ENCODE measurements at regions of chr1 and their contacts with region 1.

Region 1: DNA sequence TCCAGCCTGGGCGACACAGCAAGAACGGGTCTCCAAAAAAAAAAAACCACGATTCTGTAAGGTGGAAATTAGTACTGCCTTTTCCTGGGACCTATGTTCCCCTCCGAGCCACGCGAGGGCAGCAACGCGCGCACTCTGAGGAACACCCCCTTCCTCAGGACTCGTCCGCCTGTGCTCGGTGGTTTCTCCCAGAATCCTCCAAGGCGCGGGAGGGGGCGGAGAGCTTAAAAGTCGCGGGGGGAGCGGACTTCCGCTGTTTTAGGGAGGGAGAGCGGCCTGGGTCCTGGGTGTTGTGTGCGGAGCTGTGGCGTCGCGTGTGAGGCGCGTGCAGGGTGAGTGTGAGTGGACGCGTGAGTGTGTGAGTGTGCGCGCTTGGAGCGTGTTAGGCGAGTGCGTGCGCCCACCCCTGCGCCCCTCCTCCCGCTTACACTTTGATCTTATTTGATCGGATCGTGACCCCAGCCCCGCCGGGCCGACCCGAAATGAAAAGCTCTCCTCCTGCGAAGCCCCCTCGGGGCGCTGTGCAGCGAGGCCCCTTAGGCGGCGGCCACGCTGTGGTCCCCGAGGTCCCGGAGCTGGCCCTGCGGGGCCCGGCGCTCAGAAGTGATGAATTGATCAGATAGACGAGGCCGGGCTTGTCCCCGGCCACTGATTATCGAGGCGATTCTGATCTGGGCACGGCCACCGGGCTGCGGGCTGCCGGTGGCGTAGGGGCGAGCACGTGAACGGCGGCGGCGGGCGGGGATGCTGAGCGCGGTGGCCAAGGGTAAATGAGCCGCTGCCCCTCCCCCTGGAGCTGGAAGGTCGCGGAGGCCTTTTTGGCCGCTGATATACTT is 9.6 kb downstream of the TMEM167B start:
- DNase-seq: peak; percentile 95 to 98 (median 97)
- ATAC-seq: peak; percentile 91
- H3K4me3 ChIP-seq: peak overlapping the region; percentile 88 to 93
- H3K4me3 Mint-ChIP-seq: peak overlapping the region; percentile 98
- H3K27ac ChIP-seq: peak overlapping the region; percentile 86 to 93
- H3K27ac Mint-ChIP-seq: peak overlapping the region; percentile 99
- H3K4me1 ChIP-seq: peaks cover 9% of the 10 kb centered on the region
- H3K4me1 Mint-ChIP-seq: peaks cover 18% of the 10 kb centered on the region
- H3K27me3 ChIP-seq: no peaks in the 10 kb centered on the region
- H3K27me3 Mint-ChIP-seq: no peaks in the 10 kb centered on the region
- CTCF ChIP-seq: peak; percentile 83

Region 2: GRCh38 chr1:108199781-108200570 is 900.2 kb before region 1 on chr1 and contains the start of gene SLC25A24:
- CTCF ChIA-PET with region 1: no interaction called
- POLR2A ChIA-PET with region 1: interaction called, 3 read pairs
- intact Hi-C with region 1: loop called in 1 of 2 experiments (anchors 5 kb)
- DNase-seq: peak; percentile 34 to 85 (median 72)
- ATAC-seq: peak; percentile 94
- H3K4me3 ChIP-seq: peak within 1 kb of the TSS; percentile 75 to 98
- H3K4me3 Mint-ChIP-seq: peak within 1 kb of the TSS; percentile 88
- H3K27ac ChIP-seq: peak within 1 kb of the TSS; percentile 70 to 72
- H3K27ac Mint-ChIP-seq: peak within 1 kb of the TSS; percentile 87
- H3K4me1 ChIP-seq: peaks cover 12% of the 10 kb centered on the region
- H3K4me1 Mint-ChIP-seq: peaks cover 31% of the 10 kb centered on the region
- H3K27me3 ChIP-seq: no peaks in the 10 kb centered on the region
- H3K27me3 Mint-ChIP-seq: no peaks in the 10 kb centered on the region
- CTCF ChIP-seq: no peak
- total RNA-seq, gene SLC25A24: 3.3 to 4.3 TPM

Region 3: DNA sequence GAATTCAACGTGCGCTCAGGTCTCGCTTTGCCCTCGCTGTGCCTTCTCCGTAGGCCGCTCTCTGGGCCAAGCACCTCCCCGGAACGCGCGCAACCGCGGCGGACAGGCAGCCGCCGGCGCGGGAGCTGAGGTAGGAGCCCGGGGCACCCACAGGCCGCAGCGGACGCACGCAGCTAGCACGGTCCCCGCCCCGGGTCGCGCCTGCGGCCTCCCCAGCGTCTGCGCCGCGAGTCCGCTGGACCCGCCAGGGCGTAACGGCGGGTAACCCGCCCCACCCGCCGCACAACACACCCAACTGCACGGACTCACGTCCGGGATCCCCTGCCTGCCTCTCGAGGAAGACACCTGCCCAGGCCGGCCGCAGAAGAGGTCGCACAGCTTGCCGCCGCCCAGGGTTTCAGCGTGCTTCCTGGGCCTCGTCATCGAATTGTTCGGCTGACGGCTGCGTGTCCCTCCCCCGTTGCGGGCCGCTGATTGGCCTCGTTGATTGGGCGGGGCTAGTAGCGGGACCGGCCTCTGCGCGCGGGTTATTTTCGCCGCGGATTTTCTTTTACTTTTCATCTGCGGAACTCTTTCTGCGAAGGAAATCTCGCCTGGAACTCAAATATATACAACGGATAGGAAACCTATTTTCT is 137.0 kb before region 1 on chr1 and contains the start of gene CLCC1:
- CTCF ChIA-PET with region 1: no interaction called
- POLR2A ChIA-PET with region 1: interaction called, 12 read pairs
- intact Hi-C with region 1: loop called in 1 of 2 experiments (anchors 1 kb)
- DNase-seq: peak; percentile 83 to 96 (median 91)
- ATAC-seq: peak; percentile 87
- H3K4me3 ChIP-seq: peak within 1 kb of the TSS; percentile 57 to 86
- H3K4me3 Mint-ChIP-seq: peak within 1 kb of the TSS; percentile 87
- H3K27ac ChIP-seq: peak within 1 kb of the TSS; percentile 75 to 88
- H3K27ac Mint-ChIP-seq: peak within 1 kb of the TSS; percentile 92
- H3K4me1 ChIP-seq: peaks cover 24% of the 10 kb centered on the region
- H3K4me1 Mint-ChIP-seq: peaks cover 39% of the 10 kb centered on the region
- H3K27me3 ChIP-seq: no peaks in the 10 kb centered on the region
- H3K27me3 Mint-ChIP-seq: no peaks in the 10 kb centered on the region
- CTCF ChIP-seq: no peak
- total RNA-seq, gene CLCC1: 4.6 to 5.8 TPM

Region 4: GRCh38 chr1:109075531-109076490 is 24.3 kb before region 1 on chr1 and contains the start of gene TAF13:
- CTCF ChIA-PET with region 1: interaction called, 13 read pairs
- POLR2A ChIA-PET with region 1: interaction called, 31 read pairs
- intact Hi-C with region 1: loop called (anchors 1 kb)
- DNase-seq: peak; percentile 63 to 94 (median 86)
- ATAC-seq: peak; percentile 95
- H3K4me3 ChIP-seq: peak within 1 kb of the TSS; percentile 66 to 72
- H3K4me3 Mint-ChIP-seq: peak within 1 kb of the TSS; percentile 98
- H3K27ac ChIP-seq: peak within 1 kb of the TSS; percentile 93 to 97
- H3K27ac Mint-ChIP-seq: peak within 1 kb of the TSS; percentile 99
- H3K4me1 ChIP-seq: peaks cover 16% of the 10 kb centered on the region
- H3K4me1 Mint-ChIP-seq: peaks cover 23% of the 10 kb centered on the region
- H3K27me3 ChIP-seq: no peaks in the 10 kb centered on the region
- H3K27me3 Mint-ChIP-seq: no peaks in the 10 kb centered on the region
- CTCF ChIP-seq: no peak
- total RNA-seq, gene TAF13: 36.2 to 40.4 TPM

Region 5: GRCh38 chr1:109193653-109194590 is 93.8 kb after region 1 on chr1:
- CTCF ChIA-PET with region 1: no interaction called
- POLR2A ChIA-PET with region 1: interaction called, 5 read pairs
- intact Hi-C with region 1: loop called in 1 of 2 experiments (anchors 1 kb)
- DNase-seq: peak; percentile 16 to 63 (median 47)
- ATAC-seq: peak; percentile 75
- H3K4me3 ChIP-seq: no peak overlapping the region
- H3K4me3 Mint-ChIP-seq: no peak overlapping the region
- H3K27ac ChIP-seq: no peak overlapping the region
- H3K27ac Mint-ChIP-seq: no peak overlapping the region
- H3K4me1 ChIP-seq: peaks cover under 1% of the 10 kb centered on the region
- H3K4me1 Mint-ChIP-seq: peaks cover 2% of the 10 kb centered on the region
- H3K27me3 ChIP-seq: no peaks in the 10 kb centered on the region
- H3K27me3 Mint-ChIP-seq: no peaks in the 10 kb centered on the region
- CTCF ChIP-seq: peak; percentile 59

Region 6: GRCh38 chr1:109213785-109214468 is 113.8 kb after region 1 on chr1 and contains the start of gene SARS1:
- CTCF ChIA-PET with region 1: no interaction called
- POLR2A ChIA-PET with region 1: interaction called, 15 read pairs
- intact Hi-C with region 1: loop called in 1 of 2 experiments (anchors 1 kb)
- DNase-seq: peak; percentile 67 to 94 (median 85)
- ATAC-seq: peak; percentile 86
- H3K4me3 ChIP-seq: peak within 1 kb of the TSS; percentile 96 to 100
- H3K4me3 Mint-ChIP-seq: peak within 1 kb of the TSS; percentile 100
- H3K27ac ChIP-seq: peak within 1 kb of the TSS; percentile 79
- H3K27ac Mint-ChIP-seq: peak within 1 kb of the TSS; percentile 95
- H3K4me1 ChIP-seq: peaks cover 27% of the 10 kb centered on the region
- H3K4me1 Mint-ChIP-seq: peaks cover 44% of the 10 kb centered on the region
- H3K27me3 ChIP-seq: no peaks in the 10 kb centered on the region
- H3K27me3 Mint-ChIP-seq: peaks cover 2% of the 10 kb centered on the region
- CTCF ChIP-seq: no peak
- total RNA-seq, gene SARS1: 113 to 118 TPM

Measured in CD8-positive, alpha-beta T cell (primary cell).